SK-N-SH (cell line): ENCODE measurements at regions of chr17 and their contacts with region 1.

Region 1: DNA sequence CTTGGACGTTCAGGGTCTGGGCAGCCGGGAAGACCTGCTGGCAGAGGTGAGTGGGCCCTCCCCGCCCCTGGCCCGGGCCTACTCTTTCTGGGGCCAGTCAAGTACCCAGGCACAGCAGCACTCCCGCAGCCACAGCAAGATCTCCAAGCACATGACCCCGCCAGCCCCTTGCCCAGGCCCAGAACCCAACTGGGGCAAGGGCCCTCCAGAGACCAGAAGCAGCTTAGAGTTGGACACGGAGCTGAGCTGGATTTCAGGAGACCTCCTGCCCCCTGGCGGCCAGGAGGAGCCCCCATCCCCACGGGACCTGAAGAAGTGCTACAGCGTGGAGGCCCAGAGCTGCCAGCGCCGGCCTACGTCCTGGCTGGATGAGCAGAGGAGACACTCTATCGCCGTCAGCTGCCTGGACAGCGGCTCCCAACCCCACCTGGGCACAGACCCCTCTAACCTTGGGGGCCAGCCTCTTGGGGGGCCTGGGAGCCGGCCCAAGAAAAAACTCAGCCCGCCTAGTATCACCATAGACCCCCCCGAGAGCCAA is 8.6 kb upstream of the ABCC3 start:
- DNase-seq: peak; percentile 93
- H3K4me3 ChIP-seq: no peak overlapping the region; a peak in 1 of 4 replicates
- H3K27ac ChIP-seq: no peak overlapping the region
- H3K4me1 ChIP-seq: peaks cover 3 to 40% of the 10 kb centered on the region in 2 experiments; a peak in 3 of 4 replicates
- H3K27me3 ChIP-seq: no peaks in the 10 kb centered on the region
- CTCF ChIP-seq: peak; percentile 96
- EP300 ChIP-seq: no peak
- RAD21 ChIP-seq: peak; percentile 98

Region 2: DNA sequence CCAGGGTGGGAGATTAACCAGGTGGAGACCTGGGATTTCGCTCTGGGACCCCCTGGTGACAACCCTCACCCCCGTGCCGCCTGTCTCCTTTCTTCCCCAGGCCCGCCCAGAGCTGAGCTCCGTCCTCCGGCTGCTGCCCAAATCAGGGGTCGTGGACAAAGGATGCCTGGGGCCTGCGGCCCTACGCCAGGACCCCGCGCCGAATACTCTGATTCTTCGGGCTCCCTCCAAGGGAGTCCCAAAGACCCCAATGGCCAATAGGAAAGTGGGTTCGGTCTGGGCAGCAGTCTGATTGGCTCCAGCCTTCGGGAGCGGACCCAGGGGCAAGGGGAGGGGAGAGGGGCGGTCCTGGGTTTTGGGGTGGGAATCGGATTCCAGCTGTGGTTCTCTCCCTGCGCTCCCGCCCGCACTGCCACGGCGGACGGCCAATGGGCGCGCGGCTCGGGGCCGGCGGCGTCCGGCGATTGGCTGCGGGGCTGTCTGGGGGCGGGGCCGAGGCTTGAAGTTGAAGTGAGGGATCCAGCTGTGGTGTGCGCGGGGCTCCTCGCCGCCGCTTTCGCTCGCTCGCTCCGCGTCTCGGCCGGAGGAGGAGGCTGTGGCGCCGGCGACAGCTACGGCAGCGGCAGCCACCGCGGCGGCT is 65.8 kb before region 1 on chr17 and contains the start of gene CACNA1G:
- CTCF ChIA-PET with region 1: interaction called, 1,212 read pairs
- POLR2A ChIA-PET with region 1: interaction called, 6 read pairs
- DNase-seq: peak; percentile 99
- H3K4me3 ChIP-seq: peak within 1 kb of the TSS; percentile 49 to 74
- H3K27ac ChIP-seq: no peak within 1 kb of the TSS; a peak in 1 of 4 replicates
- H3K4me1 ChIP-seq: peaks cover 14 to 83% of the 10 kb centered on the region in 2 experiments
- H3K27me3 ChIP-seq: peaks cover 31% of the 10 kb centered on the region
- CTCF ChIP-seq: no peak
- EP300 ChIP-seq: no peak
- RAD21 ChIP-seq: peak; percentile 35
- polyA plus RNA-seq, gene CACNA1G: 0.15 and 0.21 TPM in 2 replicates

Region 3: GRCh38 chr17:50593321-50593720 is 32.8 kb before region 1 on chr17:
- CTCF ChIA-PET with region 1: interaction called, 163 read pairs
- POLR2A ChIA-PET with region 1: no interaction called
- DNase-seq: peak; percentile 97
- H3K4me3 ChIP-seq: no peak overlapping the region
- H3K27ac ChIP-seq: peak overlapping the region in 1 of 2 experiments; percentile 41; a peak in 2 of 4 replicates
- H3K4me1 ChIP-seq: peaks cover 0 to 45% of the 10 kb centered on the region in 2 experiments; a peak in 2 of 4 replicates
- H3K27me3 ChIP-seq: no peaks in the 10 kb centered on the region
- CTCF ChIP-seq: no peak
- EP300 ChIP-seq: peak in 1 of 2 experiments; percentile 20; a peak in 1 of 4 replicates
- RAD21 ChIP-seq: peak; percentile 5; the same call in 1 of the 2 replicates

Region 4: GRCh38 chr17:50649042-50649904 is 23.2 kb after region 1 on chr17:
- CTCF ChIA-PET with region 1: interaction called, 101 read pairs
- POLR2A ChIA-PET with region 1: no interaction called
- DNase-seq: no peak
- H3K4me3 ChIP-seq: no peak overlapping the region
- H3K27ac ChIP-seq: no peak overlapping the region
- H3K4me1 ChIP-seq: no peaks in the 10 kb centered on the region
- H3K27me3 ChIP-seq: no peaks in the 10 kb centered on the region
- CTCF ChIP-seq: no peak
- EP300 ChIP-seq: no peak
- RAD21 ChIP-seq: no peak

Region 5: GRCh38 chr17:50681263-50682210 is 55.4 kb after region 1 on chr17:
- CTCF ChIA-PET with region 1: interaction called, 799 read pairs
- POLR2A ChIA-PET with region 1: no interaction called
- DNase-seq: peak; percentile 94
- H3K4me3 ChIP-seq: no peak overlapping the region
- H3K27ac ChIP-seq: peak overlapping the region in 1 of 2 experiments; percentile 7; a peak in 1 of 4 replicates
- H3K4me1 ChIP-seq: peaks cover 11 to 14% of the 10 kb centered on the region in 2 experiments; a peak in 3 of 4 replicates
- H3K27me3 ChIP-seq: no peaks in the 10 kb centered on the region
- CTCF ChIP-seq: peak; percentile 88
- EP300 ChIP-seq: no peak; a peak in 1 of 4 replicates
- RAD21 ChIP-seq: peak; percentile 97